ENCODE measurements at regions of chr20 and their contacts with region 1.

Region 1: GRCh38 chr20:48657475-48658470 is 170.0 kb downstream of the PREX1 start:
- DNase-seq: peak; percentile 74
- H3K4me3 Mint-ChIP-seq: no peak overlapping the region
- H3K27ac Mint-ChIP-seq: peak overlapping the region; percentile 57
- H3K4me1 Mint-ChIP-seq: peaks cover 1% of the 10 kb centered on the region
- H3K27me3 Mint-ChIP-seq: no peaks in the 10 kb centered on the region

Region 2: DNA sequence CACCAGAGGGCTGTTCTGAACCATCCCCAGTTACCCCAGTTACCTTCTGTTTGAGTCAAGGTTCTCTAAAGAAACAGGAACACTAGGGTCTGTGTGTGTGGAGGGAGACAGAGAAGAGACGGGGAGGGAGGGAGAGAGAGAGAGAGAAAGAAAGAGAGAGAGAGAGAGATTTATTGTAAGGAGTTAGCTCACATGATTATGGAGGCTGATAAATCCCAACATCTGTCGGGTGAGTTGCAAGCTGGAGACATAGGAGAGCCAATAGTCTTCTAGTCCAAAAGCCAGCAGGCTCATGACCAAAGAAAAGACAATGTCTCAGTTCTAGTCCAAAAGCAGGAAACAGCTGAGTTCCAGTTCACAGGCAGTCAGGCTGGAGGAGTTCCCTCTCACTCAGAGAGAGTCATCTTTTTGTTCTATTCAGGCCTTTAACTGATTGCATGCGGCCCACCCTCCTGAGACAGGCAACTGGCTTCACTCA is 246.6 kb before region 1 on chr20:
- CTCF ChIA-PET with region 1: no interaction called
- POLR2A ChIA-PET with region 1: no interaction called
- intact Hi-C with region 1: no loop called
- DNase-seq: no peak
- H3K4me3 Mint-ChIP-seq: no peak overlapping the region
- H3K27ac Mint-ChIP-seq: no peak overlapping the region
- H3K4me1 Mint-ChIP-seq: no peaks in the 10 kb centered on the region
- H3K27me3 Mint-ChIP-seq: peaks cover 7% of the 10 kb centered on the region

Region 3: GRCh38 chr20:48668451-48668952 is 10.7 kb after region 1 on chr20:
- CTCF ChIA-PET with region 1: interaction called, 21 read pairs
- POLR2A ChIA-PET with region 1: no interaction called
- intact Hi-C with region 1: no loop called
- DNase-seq: no peak
- H3K4me3 Mint-ChIP-seq: no peak overlapping the region
- H3K27ac Mint-ChIP-seq: no peak overlapping the region
- H3K4me1 Mint-ChIP-seq: no peaks in the 10 kb centered on the region
- H3K27me3 Mint-ChIP-seq: no peaks in the 10 kb centered on the region

Region 4: GRCh38 chr20:48818407-48818987 is 160.7 kb after region 1 on chr20:
- CTCF ChIA-PET with region 1: interaction called, 3 read pairs
- POLR2A ChIA-PET with region 1: no interaction called
- intact Hi-C with region 1: loop called (anchors 5 kb)
- DNase-seq: peak; percentile 70
- H3K4me3 Mint-ChIP-seq: peak overlapping the region; percentile 51
- H3K27ac Mint-ChIP-seq: peak overlapping the region; percentile 98
- H3K4me1 Mint-ChIP-seq: peaks cover 89% of the 10 kb centered on the region
- H3K27me3 Mint-ChIP-seq: no peaks in the 10 kb centered on the region

Region 5: DNA sequence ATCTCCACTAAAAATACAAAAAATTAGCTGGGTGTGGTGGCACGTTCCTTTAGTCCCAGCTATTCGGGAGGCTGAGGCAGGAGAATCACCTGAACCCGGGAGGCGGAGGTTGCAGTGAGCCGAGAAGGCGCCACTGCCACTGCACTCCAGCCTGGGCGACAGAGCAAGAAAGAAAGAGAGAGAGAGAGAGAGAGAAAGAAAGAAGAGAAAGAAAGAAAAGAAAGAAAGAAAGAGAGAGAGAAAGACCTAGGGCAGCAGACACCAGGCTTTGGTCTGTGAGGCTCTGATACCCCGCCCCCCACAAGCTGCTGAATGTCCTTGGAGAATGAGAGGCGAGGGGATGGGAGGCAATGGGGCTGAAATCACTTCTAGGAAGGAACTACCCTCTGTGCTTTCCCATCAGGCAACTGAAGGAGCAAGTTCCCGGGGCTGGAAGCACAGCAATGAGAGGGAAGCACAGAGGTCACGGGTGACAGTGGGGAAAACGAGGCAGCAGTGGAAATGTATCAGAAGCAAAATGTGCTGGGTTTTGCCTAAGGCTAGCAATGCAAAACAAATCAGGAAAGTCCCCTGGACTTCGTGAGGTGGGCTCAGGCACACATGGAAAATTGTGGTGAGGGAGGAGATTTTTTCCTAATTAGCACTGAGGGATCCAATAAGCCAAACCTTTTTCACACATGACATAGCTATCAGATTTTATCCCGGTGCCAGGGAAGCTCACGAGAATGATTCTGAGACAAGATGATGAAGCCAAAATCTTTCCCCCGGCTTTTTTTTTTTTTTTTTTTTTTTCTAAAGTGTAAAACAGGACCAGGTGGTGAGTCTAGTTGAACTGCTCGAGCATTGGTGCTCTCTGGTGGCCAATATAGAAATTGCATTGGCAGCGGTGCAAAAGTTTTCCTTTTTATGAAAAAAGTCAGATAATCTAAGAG is 246.9 kb after region 1 on chr20:
- CTCF ChIA-PET with region 1: interaction called, 171 read pairs
- POLR2A ChIA-PET with region 1: interaction called, 4 read pairs
- intact Hi-C with region 1: loop called (anchors 1 kb)
- DNase-seq: peak; percentile 80
- H3K4me3 Mint-ChIP-seq: no peak overlapping the region
- H3K27ac Mint-ChIP-seq: peak overlapping the region; percentile 28
- H3K4me1 Mint-ChIP-seq: peaks cover 14% of the 10 kb centered on the region
- H3K27me3 Mint-ChIP-seq: no peaks in the 10 kb centered on the region